ENCODE measurements at regions of chr15 and their contacts with region 1.

Region 1: DNA sequence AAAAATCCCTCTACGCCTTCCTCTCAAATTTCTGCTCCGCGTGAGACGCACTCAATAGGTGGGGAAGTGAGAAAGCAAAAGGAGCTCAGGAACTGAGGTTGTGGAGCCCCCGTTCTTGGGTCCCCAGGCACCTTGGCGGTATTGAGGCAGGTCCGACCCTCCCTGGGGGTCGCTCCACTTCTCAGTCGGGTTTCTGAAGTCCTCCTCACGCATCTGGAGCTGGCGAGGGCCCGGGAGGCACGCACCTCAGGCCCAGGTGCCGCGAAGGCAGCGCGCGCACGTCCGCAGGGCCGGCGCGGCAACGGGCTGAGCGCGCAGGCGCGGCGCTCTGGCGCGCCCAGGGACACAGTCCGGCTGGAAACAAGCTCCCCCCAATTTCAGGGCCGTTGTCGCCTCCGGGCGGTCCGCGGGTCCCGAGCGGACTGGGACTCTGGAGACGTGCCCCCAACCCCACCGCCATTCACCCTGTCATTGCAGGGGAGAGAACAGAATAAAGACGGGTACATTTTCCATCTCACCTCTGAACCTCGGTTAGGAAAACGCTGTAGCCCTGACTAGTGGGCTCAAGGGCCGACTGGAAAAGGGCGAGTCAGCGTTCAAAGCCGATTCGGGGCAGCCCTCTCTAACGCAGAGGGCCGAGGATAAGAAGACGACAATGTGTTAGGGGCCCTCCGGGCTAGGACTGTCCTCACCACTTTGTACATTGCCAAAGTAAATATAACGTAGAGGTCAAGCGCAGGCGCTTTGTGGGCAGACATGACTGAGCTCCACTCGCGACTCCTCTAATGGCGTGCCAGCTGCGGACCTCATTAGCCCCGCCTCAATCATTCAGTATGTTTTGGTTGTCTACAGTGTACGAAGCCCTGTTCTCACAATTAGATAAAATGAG is at the start of gene ZNF770:
- DNase-seq: peak; percentile 82
- ATAC-seq: peak; percentile 78
- H3K4me3 ChIP-seq: peak within 1 kb of the TSS; percentile 91
- H3K27ac ChIP-seq: peak within 1 kb of the TSS; percentile 81
- H3K4me1 ChIP-seq: peaks cover 42% of the 10 kb centered on the region
- H3K27me3 ChIP-seq: no peaks in the 10 kb centered on the region
- CTCF ChIP-seq: no peak
- total RNA-seq, gene ZNF770: 26.9 and 27.5 TPM in 2 replicates

Region 2: DNA sequence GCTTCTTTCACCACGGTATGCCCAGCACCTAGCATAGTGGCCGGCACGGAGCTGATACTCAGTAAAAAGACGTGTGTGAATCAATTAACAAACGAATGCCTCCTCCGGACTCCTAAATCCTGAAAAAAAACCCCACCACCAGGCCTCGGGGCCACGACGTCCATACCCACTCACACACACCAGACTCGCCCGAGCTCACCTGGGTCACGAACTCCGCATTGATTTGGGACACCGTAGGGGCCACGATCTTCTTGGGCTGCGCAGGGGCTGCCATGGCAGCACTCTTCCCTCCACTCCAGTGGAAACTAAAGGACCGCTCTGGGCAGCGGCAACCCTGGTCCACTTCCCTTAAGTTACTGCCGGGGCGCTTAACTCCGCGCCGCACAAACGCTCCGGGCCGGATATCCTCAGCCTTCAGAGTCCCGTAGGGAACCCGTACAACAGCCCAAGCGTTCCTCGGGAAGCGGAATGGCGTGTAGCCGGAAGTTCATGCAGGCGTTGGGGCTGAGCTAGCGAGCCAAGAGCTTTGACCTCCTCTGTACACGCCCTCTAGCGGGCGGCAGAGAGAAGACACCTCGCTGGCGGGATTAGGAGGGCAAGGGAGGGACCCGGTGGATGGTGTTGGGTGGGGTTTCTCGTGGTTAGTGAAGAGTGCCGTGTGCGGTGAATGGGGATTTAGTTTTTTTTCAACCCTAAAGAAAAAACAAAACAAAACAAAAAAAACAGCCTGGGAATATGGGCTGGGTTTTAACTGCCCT is 18.7 kb before region 1 on chr15 and contains the start of gene AQR:
- CTCF ChIA-PET with region 1: interaction called, 21 read pairs
- POLR2A ChIA-PET with region 1: interaction called, 22 read pairs
- intact Hi-C with region 1: loop called (anchors 1 kb)
- DNase-seq: peak; percentile 99
- ATAC-seq: peak; percentile 100
- H3K4me3 ChIP-seq: peak within 1 kb of the TSS; percentile 91
- H3K27ac ChIP-seq: no peak within 1 kb of the TSS
- H3K4me1 ChIP-seq: 0 out of 2 replicates have a peak, but pooled peaks cover 5% of the 10 kb centered on the region
- H3K27me3 ChIP-seq: no peaks in the 10 kb centered on the region
- CTCF ChIP-seq: peak; percentile 92
- total RNA-seq, gene AQR: 26.1 and 34.2 TPM in 2 replicates

Region 3: GRCh38 chr15:35545824-35546510 is 557.7 kb after region 1 on chr15 and contains the start of gene DPH6:
- CTCF ChIA-PET with region 1: no interaction called
- POLR2A ChIA-PET with region 1: no interaction called
- intact Hi-C with region 1: loop called (anchors 10 kb)
- DNase-seq: peak; percentile 76
- ATAC-seq: peak; percentile 90
- H3K4me3 ChIP-seq: peak within 1 kb of the TSS; percentile 76
- H3K27ac ChIP-seq: peak within 1 kb of the TSS; percentile 89
- H3K4me1 ChIP-seq: peaks cover 19% of the 10 kb centered on the region
- H3K27me3 ChIP-seq: no peaks in the 10 kb centered on the region
- CTCF ChIP-seq: no peak
- total RNA-seq, gene DPH6: 6.9 and 8.1 TPM in 2 replicates

Measured in PC-3 (cell line).